ENCODE measurements at regions of chr3 and their contacts with region 1.

Region 1: GRCh38 chr3:44323341-44323955 is 15.1 kb upstream of the TCAIM start:
- DNase-seq: peak; percentile 56 to 68
- H3K4me3 ChIP-seq: no peak overlapping the region
- H3K4me3 Mint-ChIP-seq: no peak overlapping the region
- H3K27ac Mint-ChIP-seq: no peak overlapping the region
- H3K4me1 ChIP-seq: peaks cover 12% of the 10 kb centered on the region
- H3K4me1 Mint-ChIP-seq: no peaks in the 10 kb centered on the region
- H3K27me3 ChIP-seq: no peaks in the 10 kb centered on the region
- H3K27me3 Mint-ChIP-seq: no peaks in the 10 kb centered on the region
- CTCF ChIP-seq: peak; percentile 72 to 84

Region 2: GRCh38 chr3:44338010-44338827 is 14.8 kb after region 1 on chr3 and contains the start of gene TCAIM:
- CTCF ChIA-PET with region 1: interaction called, 4 read pairs
- POLR2A ChIA-PET with region 1: interaction called, 6 read pairs
- intact Hi-C with region 1: loop called (anchors 1 kb)
- DNase-seq: peak; percentile 98
- H3K4me3 ChIP-seq: peak within 1 kb of the TSS; percentile 73
- H3K4me3 Mint-ChIP-seq: peak within 1 kb of the TSS; percentile 85
- H3K27ac Mint-ChIP-seq: peak within 1 kb of the TSS; percentile 86
- H3K4me1 ChIP-seq: no peaks in the 10 kb centered on the region; the same call in 1 of the 2 replicates
- H3K4me1 Mint-ChIP-seq: peaks cover 7% of the 10 kb centered on the region
- H3K27me3 ChIP-seq: no peaks in the 10 kb centered on the region
- H3K27me3 Mint-ChIP-seq: no peaks in the 10 kb centered on the region
- CTCF ChIP-seq: no peak
- total RNA-seq, gene TCAIM: 14.7 and 15.0 TPM in 2 replicates

Region 3: DNA sequence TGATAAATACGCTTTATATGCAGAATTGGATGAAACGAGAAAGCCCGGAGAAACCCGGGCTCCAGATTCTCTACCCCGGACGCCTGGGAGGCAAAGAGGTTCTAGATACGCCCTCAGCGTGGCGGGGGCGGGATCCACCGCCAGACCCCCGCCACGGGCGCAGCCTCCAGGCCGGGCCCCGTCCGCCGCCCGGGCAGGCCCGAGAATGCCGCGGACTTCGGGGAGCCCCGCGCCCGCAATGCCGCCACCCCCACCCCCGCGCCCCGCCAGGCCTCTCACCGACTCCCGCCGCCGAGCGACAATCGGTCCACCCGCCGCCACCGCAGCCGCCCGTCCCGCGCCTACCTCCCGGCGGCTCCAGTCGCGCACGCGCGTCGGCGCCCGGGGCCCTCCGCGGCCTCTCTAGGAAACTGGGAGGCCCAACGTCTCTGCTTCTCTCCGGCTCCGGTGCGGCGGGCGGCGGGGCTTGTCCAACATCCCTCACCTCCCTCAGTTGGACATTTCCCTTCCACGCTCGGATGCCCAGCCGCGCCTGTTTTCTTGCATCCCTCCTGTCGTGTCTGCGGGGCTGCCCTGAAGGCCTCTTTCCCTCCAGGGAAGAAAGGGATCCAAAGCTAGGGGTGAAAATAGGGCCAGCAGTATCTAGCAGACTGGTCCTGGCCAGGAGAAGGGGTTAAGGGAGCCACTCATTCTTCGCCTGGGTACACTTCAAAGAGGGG is 154.0 kb after region 1 on chr3 and contains the start of gene ZNF445:
- CTCF ChIA-PET with region 1: no interaction called
- POLR2A ChIA-PET with region 1: no interaction called
- intact Hi-C with region 1: loop called (anchors 1 kb)
- DNase-seq: peak; percentile 76 to 86
- H3K4me3 ChIP-seq: peak within 1 kb of the TSS; percentile 67
- H3K4me3 Mint-ChIP-seq: peak within 1 kb of the TSS; percentile 88
- H3K27ac Mint-ChIP-seq: peak within 1 kb of the TSS; percentile 71
- H3K4me1 ChIP-seq: peaks cover 12% of the 10 kb centered on the region
- H3K4me1 Mint-ChIP-seq: peaks cover 6% of the 10 kb centered on the region
- H3K27me3 ChIP-seq: no peaks in the 10 kb centered on the region
- H3K27me3 Mint-ChIP-seq: no peaks in the 10 kb centered on the region
- CTCF ChIP-seq: no peak
- total RNA-seq, gene ZNF445: 19.0 TPM in 2 replicates

Region 4: DNA sequence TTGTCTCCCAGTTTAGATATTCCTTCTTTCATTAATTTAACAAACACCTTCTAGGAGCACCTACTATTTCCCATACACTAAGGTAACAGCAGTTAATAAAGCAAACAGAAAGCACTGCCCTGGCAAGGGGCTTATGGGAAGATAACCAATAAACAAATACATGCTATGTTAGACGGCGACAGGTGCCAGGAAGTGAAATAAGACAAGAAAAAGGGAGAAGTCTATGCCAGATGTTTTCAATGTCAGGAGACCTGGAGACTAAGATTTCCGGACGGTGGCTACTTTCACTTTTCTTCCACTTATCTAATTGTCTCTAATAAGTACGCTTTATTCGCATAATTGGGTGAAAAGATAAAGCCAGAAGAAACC is 186.5 kb after region 1 on chr3:
- CTCF ChIA-PET with region 1: no interaction called
- POLR2A ChIA-PET with region 1: no interaction called
- intact Hi-C with region 1: loop called (anchors 2 kb)
- DNase-seq: no peak
- H3K4me3 ChIP-seq: peak overlapping the region; percentile 56
- H3K4me3 Mint-ChIP-seq: peak overlapping the region; percentile 94
- H3K27ac Mint-ChIP-seq: peak overlapping the region; percentile 95
- H3K4me1 ChIP-seq: peaks cover 11% of the 10 kb centered on the region
- H3K4me1 Mint-ChIP-seq: peaks cover 6% of the 10 kb centered on the region
- H3K27me3 ChIP-seq: no peaks in the 10 kb centered on the region
- H3K27me3 Mint-ChIP-seq: no peaks in the 10 kb centered on the region
- CTCF ChIP-seq: no peak

Region 5: GRCh38 chr3:44648564-44649229 is 325.2 kb after region 1 on chr3 and contains the start of gene ZNF35:
- CTCF ChIA-PET with region 1: no interaction called
- POLR2A ChIA-PET with region 1: no interaction called
- intact Hi-C with region 1: loop called (anchors 1 kb)
- DNase-seq: peak; percentile 90 to 92
- H3K4me3 ChIP-seq: peak within 1 kb of the TSS; percentile 64
- H3K4me3 Mint-ChIP-seq: peak within 1 kb of the TSS; percentile 86
- H3K27ac Mint-ChIP-seq: peak within 1 kb of the TSS; percentile 87
- H3K4me1 ChIP-seq: no peaks in the 10 kb centered on the region
- H3K4me1 Mint-ChIP-seq: no peaks in the 10 kb centered on the region
- H3K27me3 ChIP-seq: no peaks in the 10 kb centered on the region
- H3K27me3 Mint-ChIP-seq: no peaks in the 10 kb centered on the region
- CTCF ChIP-seq: no peak
- total RNA-seq, gene ZNF35: 12.0 and 14.7 TPM in 2 replicates